SK-N-SH (cell line): ENCODE measurements at regions of chr5 and their contacts with region 1.

Region 1: DNA sequence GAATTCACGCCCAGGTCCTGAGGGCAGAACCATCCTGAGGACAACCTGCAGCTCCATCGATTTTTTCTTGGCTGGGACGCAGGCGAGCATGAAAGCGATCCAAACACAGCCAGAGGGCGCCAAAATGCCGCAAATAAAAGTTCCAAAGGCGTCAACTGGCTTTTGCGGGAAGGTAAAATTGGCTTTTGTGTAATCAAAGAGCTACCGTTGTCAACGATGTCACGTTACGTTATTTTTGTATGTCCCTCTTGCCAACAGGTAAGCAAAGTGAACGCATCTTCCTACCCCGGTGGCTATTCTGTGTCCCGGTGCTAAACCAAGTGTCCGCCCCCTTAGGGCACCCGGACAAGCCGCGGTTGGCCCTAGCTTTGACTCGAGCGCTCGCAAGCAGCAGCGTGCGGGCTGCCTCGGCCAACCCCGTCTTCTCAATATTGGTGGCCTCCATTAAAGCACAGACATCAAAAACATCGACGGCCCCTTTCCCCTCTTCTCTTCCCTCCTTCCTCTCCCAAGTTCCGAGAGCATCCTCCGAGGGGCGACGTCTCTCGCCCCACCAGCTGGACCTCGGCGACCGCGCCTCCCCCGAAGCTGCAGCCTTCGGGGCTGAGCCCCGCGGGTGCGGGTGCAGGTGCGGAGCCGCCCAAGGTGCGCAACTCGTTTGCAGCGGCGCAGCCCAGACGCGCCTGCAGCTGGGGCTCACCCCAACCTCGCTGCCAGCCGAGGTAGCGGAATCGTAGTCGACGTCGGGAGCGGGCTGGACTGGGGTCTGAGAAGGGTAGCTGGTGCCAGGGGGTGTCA is 1.1 kb upstream of the BASP1 start:
- DNase-seq: peak; percentile 76
- H3K4me3 ChIP-seq: peak overlapping the region; percentile 46 to 57
- H3K27ac ChIP-seq: peak overlapping the region in 1 of 2 experiments; percentile 20; a peak in 1 of 4 replicates
- H3K4me1 ChIP-seq: peaks cover 2 to 11% of the 10 kb centered on the region in 2 experiments; a peak in 3 of 4 replicates
- H3K27me3 ChIP-seq: no peaks in the 10 kb centered on the region
- CTCF ChIP-seq: peak; percentile 91
- EP300 ChIP-seq: no peak
- RAD21 ChIP-seq: peak; percentile 94

Region 2: DNA sequence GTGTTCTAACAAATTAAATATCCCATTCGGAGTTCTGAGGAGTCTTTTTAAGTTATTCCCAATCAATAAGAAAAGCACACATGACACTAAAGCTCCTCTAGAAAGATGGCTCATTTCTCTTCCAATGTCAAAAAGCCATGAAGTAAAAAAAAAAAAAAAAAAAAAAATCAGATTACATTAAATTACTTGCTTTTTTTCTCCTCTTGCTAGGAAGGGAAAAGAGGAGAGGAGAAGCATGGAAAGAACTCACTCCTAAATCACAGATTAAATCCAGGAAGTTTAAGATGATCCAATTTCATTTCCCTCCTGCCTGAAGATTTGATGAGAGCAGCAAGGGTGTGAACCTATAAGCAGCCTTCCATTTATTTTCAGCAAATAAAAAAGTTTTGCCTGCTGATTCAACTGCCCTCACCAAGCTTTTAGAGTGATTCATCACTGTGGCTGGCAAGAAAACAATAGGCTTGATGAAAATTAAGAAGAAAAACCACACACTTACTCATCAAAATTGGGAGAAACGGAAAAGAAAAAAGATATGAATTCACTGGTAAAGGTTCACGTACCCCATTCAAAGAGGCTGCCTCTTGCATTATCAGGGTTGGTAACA is 300.0 kb before region 1 on chr5:
- CTCF ChIA-PET with region 1: no interaction called
- POLR2A ChIA-PET with region 1: no interaction called
- DNase-seq: no peak
- H3K4me3 ChIP-seq: 0 out of 4 replicates have a peak overlapping the region, but pooled peaks of 1 of the 2 experiments have one; percentile 25
- H3K27ac ChIP-seq: peak overlapping the region in 1 of 2 experiments; percentile 93; a peak in 3 of 4 replicates
- H3K4me1 ChIP-seq: peaks cover 3 to 64% of the 10 kb centered on the region in 2 experiments
- H3K27me3 ChIP-seq: no peaks in the 10 kb centered on the region
- CTCF ChIP-seq: no peak
- EP300 ChIP-seq: peak in 1 of 2 experiments; percentile 69; a peak in 2 of 4 replicates
- RAD21 ChIP-seq: no peak

Region 3: GRCh38 chr5:17204133-17204489 is 12.3 kb before region 1 on chr5:
- CTCF ChIA-PET with region 1: interaction called, 40 read pairs
- POLR2A ChIA-PET with region 1: no interaction called
- DNase-seq: peak; percentile 15
- H3K4me3 ChIP-seq: no peak overlapping the region
- H3K27ac ChIP-seq: no peak overlapping the region
- H3K4me1 ChIP-seq: no peaks in the 10 kb centered on the region; a peak in 2 of 4 replicates
- H3K27me3 ChIP-seq: no peaks in the 10 kb centered on the region
- CTCF ChIP-seq: no peak
- EP300 ChIP-seq: no peak
- RAD21 ChIP-seq: no peak

Region 4: DNA sequence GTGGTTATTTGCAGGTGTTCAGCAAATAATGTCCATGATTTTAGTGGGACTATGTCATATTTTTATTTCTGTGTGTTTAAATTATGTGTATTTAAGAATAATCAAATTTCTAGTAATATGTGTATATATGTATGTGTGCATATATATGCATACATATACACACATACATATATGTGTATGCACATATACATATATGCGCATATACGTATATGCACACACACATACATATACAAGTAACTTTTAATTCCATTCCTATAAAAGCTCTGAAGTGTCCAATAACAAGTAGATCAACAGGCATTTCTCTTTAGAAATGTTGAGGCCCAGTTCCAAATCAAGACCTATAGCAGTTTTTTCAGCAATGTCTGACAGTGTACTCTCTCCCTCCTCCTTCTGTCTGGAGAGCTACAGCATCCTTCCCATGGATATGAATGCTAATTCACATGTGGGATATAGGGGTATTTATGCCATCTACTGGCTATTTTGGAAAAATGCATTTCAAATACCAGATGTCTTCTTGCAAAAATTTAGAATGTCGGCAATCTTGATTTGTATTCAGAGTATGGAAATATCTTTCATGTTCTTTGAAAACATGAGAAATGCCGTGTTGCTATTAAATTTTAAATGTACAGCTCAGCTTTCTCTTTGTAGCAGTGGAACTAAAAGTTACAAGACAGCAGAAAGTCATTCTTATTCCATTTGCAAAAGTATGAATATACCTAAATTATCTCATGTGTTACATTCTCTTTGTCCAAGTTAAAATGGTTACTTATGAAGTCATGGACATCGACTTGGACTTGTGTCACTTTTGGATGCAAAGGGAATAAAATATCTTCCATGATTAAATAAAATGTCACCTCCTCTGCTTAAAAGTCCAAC is 1065.5 kb after region 1 on chr5:
- CTCF ChIA-PET with region 1: interaction called, 49 read pairs
- POLR2A ChIA-PET with region 1: no interaction called
- DNase-seq: peak; percentile 51
- H3K4me3 ChIP-seq: no peak overlapping the region
- H3K27ac ChIP-seq: no peak overlapping the region
- H3K4me1 ChIP-seq: no peaks in the 10 kb centered on the region
- H3K27me3 ChIP-seq: no peaks in the 10 kb centered on the region
- CTCF ChIP-seq: peak; percentile 69
- EP300 ChIP-seq: no peak
- RAD21 ChIP-seq: peak; percentile 74

Region 5: GRCh38 chr5:18305297-18305924 is 1089.0 kb after region 1 on chr5:
- CTCF ChIA-PET with region 1: interaction called, 81 read pairs
- POLR2A ChIA-PET with region 1: interaction called, 5 read pairs
- DNase-seq: peak; percentile 55
- H3K4me3 ChIP-seq: peak overlapping the region in 1 of 2 experiments; percentile 4; a peak in 1 of 4 replicates
- H3K27ac ChIP-seq: no peak overlapping the region
- H3K4me1 ChIP-seq: no peaks in the 10 kb centered on the region
- H3K27me3 ChIP-seq: no peaks in the 10 kb centered on the region
- CTCF ChIP-seq: peak; percentile 74
- EP300 ChIP-seq: no peak
- RAD21 ChIP-seq: peak; percentile 86

Region 6: GRCh38 chr5:18321262-18321942 is 1105.0 kb after region 1 on chr5:
- CTCF ChIA-PET with region 1: interaction called, 23 read pairs
- POLR2A ChIA-PET with region 1: no interaction called
- DNase-seq: no peak
- H3K4me3 ChIP-seq: no peak overlapping the region
- H3K27ac ChIP-seq: no peak overlapping the region
- H3K4me1 ChIP-seq: no peaks in the 10 kb centered on the region
- H3K27me3 ChIP-seq: no peaks in the 10 kb centered on the region
- CTCF ChIP-seq: no peak
- EP300 ChIP-seq: no peak
- RAD21 ChIP-seq: no peak